GM23248 (cell line): ENCODE measurements at regions of chrX and their contacts with region 1.

Region 1: DNA sequence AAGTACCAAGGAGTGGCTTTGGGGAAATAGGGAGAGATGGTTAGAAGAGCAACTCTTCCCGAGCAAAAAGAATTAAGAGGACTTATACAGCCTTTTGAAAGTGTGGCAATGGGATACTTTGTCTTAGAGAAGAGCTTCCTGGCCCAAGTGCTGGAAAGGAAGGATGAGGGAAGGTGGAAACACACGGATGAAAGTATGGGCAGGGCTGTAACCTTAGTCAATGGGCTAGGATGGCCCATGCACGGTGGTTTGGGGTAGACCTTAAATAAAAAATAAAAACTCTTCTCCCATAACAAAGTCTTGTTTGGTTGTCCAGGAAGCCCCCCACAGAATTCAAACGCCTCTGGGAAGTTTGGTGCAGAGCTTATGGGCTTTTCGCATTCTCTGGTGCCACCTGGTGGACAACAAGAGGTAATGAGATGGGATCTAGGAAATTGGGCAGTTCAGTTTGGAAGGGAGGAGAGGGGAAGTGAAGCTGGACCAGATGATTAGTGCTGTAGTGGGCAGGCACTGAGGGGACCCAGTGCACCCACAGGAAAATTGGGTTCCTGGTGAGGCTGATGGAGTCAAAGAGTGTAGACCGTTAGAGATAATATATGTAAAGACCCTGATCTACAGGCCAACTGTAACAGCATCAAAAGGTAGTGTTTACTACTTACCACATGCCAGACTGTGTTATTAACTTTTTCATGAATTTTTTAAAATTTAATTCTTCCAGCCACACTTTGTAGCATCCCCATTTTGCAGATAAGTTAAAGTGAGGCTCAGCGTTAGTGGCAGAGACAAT is 13.8 kb upstream of the ENOX2 start:
- DNase-seq: peak; percentile 43
- H3K4me3 ChIP-seq: no peak overlapping the region
- H3K27ac ChIP-seq: no peak overlapping the region
- H3K4me1 ChIP-seq: no peaks in the 10 kb centered on the region
- H3K27me3 ChIP-seq: no peaks in the 10 kb centered on the region

Region 2: GRCh38 chrX:130393451-130394074 is 523.3 kb before region 1 on chrX:
- in situ Hi-C with region 1: loop called (anchors 10 kb)
- DNase-seq: peak; percentile 67
- H3K4me3 ChIP-seq: no peak overlapping the region
- H3K27ac ChIP-seq: no peak overlapping the region
- H3K4me1 ChIP-seq: no peaks in the 10 kb centered on the region
- H3K27me3 ChIP-seq: no peaks in the 10 kb centered on the region

Region 3: GRCh38 chrX:130539721-130540321 is 377.0 kb before region 1 on chrX:
- in situ Hi-C with region 1: loop called (anchors 10 kb)
- DNase-seq: peak; percentile 71
- H3K4me3 ChIP-seq: no peak overlapping the region
- H3K27ac ChIP-seq: no peak overlapping the region
- H3K4me1 ChIP-seq: no peaks in the 10 kb centered on the region
- H3K27me3 ChIP-seq: no peaks in the 10 kb centered on the region

Region 4: GRCh38 chrX:131861088-131861787 is 944.4 kb after region 1 on chrX:
- in situ Hi-C with region 1: no loop called
- DNase-seq: peak; percentile 0
- H3K4me3 ChIP-seq: no peak overlapping the region
- H3K27ac ChIP-seq: no peak overlapping the region
- H3K4me1 ChIP-seq: no peaks in the 10 kb centered on the region
- H3K27me3 ChIP-seq: no peaks in the 10 kb centered on the region